GM12878 (cell line): ENCODE measurements at regions of chr6 and their contacts with region 1.

Region 1: DNA sequence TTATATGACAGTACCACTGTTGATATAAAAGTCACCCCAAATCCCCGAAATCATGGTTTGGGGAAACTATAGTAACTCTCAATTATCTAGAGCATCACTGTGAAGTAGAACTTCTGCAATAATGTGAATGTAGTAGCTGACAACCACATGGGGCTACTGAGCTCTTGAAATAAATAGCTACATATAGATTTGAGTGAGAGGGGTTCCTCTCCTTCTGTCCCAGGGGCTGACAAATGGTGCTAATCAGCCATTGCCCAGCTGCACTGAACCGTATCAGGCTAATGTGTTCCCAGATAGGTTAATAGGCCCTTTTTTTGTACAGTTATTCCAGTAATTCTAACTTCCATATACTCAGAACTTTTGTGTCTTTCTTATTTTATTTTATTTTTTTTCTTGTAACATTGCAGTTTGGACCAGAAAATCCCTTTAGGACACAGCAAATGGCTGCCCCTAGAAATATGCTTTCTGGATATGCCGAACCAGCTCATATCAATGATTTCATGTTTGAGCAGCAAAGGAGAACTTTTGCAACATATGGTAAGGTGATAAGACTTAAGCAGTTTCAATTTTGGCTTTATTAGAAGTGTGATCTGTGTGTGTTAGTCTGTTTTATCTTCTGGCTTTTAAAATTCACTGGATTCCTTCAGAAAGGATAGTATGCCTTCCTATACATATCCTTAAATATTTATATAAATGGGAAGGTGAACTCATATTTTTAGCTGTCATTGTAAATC is 21.1 kb downstream of the CDC40 start:
- DNase-seq: no peak
- ATAC-seq: no peak
- H3K4me3 ChIP-seq: no peak overlapping the region
- H3K27ac ChIP-seq: no peak overlapping the region
- H3K4me1 ChIP-seq: peaks cover 9% of the 10 kb centered on the region
- H3K27me3 ChIP-seq: no peaks in the 10 kb centered on the region
- CTCF ChIP-seq: no peak
- EP300 ChIP-seq: no peak
- POLR2A ChIP-seq: no peak
- RAD21 ChIP-seq: no peak

Region 2: DNA sequence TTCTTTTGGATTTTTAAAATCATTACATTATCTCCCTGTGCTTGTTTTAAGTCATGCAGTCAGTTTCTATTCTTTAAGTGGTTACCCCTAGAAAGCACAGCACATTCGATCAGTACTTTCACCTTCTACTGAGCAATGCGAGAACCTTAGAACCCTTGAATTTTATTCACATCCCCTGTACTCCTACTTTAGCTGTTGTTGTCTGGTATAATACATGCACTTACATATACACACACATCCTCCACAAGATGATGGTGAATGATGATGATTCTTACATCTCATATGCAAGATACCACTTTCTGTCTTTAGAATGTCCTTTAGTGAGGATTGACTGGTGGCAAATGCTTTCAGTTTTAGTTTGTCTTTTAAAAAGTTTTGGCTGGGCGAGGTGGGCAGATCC is 15.4 kb before region 1 on chr6:
- CTCF ChIA-PET with region 1: interaction called, 8 read pairs
- POLR2A ChIA-PET with region 1: interaction called, 6 read pairs
- RAD21 ChIA-PET with region 1: interaction called, 13 read pairs
- SMC1A ChIA-PET with region 1: interaction called, 11 read pairs
- in situ Hi-C with region 1: no loop called
- intact Hi-C with region 1: no loop called
- DNase-seq: no peak
- ATAC-seq: peak; percentile 69
- H3K4me3 ChIP-seq: peak overlapping the region; percentile 66
- H3K27ac ChIP-seq: peak overlapping the region; percentile 27; the same call in 1 of the 2 replicates
- H3K4me1 ChIP-seq: peaks cover 3% of the 10 kb centered on the region
- H3K27me3 ChIP-seq: no peaks in the 10 kb centered on the region
- CTCF ChIP-seq: no peak
- EP300 ChIP-seq: no peak
- POLR2A ChIP-seq: no peak
- RAD21 ChIP-seq: no peak

Region 3: GRCh38 chr6:110217266-110217665 is 15.9 kb after region 1 on chr6:
- CTCF ChIA-PET with region 1: interaction called, 8 read pairs
- POLR2A ChIA-PET with region 1: interaction called, 4 read pairs
- RAD21 ChIA-PET with region 1: no interaction called
- SMC1A ChIA-PET with region 1: interaction called, 21 read pairs
- in situ Hi-C with region 1: no loop called
- intact Hi-C with region 1: no loop called
- DNase-seq: no peak
- ATAC-seq: no peak
- H3K4me3 ChIP-seq: no peak overlapping the region
- H3K27ac ChIP-seq: no peak overlapping the region
- H3K4me1 ChIP-seq: no peaks in the 10 kb centered on the region
- H3K27me3 ChIP-seq: no peaks in the 10 kb centered on the region
- CTCF ChIP-seq: no peak
- EP300 ChIP-seq: no peak
- POLR2A ChIP-seq: no peak
- RAD21 ChIP-seq: no peak